Activated CD8-positive, alpha-beta T cell treated with anti-CD3 and anti-CD28 coated beads for 36 hours (primary cell): ENCODE measurements at regions of chr20 and their contacts with region 1.

Region 1: DNA sequence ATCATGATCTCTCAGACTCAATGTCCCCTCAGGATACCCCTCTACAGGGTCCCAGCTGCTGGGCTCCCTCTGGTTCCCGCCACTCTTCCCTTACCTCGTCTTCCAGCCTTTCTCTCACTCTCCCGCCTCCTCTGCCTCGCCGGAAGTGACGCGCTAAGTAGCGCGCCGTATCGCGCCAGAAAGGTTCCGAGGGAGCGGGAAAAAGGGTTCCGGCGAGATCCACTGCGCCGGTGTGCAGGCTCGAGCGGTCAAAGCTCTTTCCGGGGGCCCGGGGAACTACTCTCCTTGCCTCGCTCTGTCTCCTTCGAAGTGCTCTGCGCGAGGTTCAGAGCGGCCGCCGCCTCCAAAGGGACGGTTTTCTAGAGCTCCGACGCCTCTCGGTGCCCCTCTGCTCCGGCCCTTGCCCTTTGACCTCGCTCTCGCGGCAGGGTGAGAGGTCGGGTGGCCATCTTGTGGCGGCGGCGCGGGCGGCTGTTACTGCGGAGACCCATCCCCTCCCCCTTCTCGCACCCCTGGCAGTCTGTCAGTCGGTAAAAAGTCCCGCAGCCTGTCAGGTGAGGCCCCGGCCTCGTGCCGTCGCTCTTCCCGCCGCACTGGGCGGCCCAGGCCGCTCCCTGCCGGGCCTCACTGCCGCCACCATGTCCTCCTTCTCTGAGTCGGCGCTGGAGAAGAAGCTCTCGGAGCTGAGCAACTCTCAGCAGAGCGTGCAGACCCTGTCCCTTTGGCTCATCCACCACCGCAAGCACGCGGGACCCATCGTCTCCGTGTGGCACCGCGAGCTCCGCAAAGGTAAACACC is at the starts of genes RPRD1B and TTI1:
- DNase-seq: peak; percentile 91
- ATAC-seq: peak; percentile 89
- H3K4me3 Mint-ChIP-seq: peak within 1 kb of the TSS; percentile 88
- H3K27ac Mint-ChIP-seq: peak within 1 kb of the TSS; percentile 99
- H3K4me1 Mint-ChIP-seq: peaks cover 60% of the 10 kb centered on the region
- H3K27me3 Mint-ChIP-seq: no peaks in the 10 kb centered on the region
- CTCF ChIP-seq: no peak
- total RNA-seq, gene RPRD1B: 29.1 to 29.3 TPM
- total RNA-seq, gene TTI1: 34.1 to 39.7 TPM

Region 2: DNA sequence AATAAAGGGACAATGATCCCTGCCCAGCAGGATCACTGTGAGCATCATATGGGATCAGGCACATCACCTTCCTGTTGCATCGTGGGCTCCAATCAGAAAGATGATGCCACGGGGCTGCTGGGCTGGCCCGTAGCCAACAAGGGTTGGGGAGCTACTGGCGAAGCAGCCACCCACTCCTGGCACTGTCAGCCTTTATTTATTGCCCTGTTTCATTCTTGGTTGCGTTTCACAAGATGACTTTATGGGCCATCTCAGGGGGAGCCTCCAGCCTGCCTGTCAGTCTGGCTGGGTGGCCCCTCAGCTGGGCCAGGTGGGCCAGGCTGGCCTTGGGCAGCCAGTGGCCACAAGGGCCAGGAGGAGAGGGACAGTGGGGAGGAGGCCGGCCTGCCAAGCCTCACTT is 113.2 kb before region 1 on chr20:
- CTCF ChIA-PET with region 1: no interaction called
- POLR2A ChIA-PET with region 1: no interaction called
- intact Hi-C with region 1: no loop called
- DNase-seq: peak; percentile 39
- ATAC-seq: no peak
- H3K4me3 Mint-ChIP-seq: no peak overlapping the region
- H3K27ac Mint-ChIP-seq: no peak overlapping the region
- H3K4me1 Mint-ChIP-seq: peaks cover 8% of the 10 kb centered on the region
- H3K27me3 Mint-ChIP-seq: peaks cover 18% of the 10 kb centered on the region
- CTCF ChIP-seq: no peak

Region 3: GRCh38 chr20:38043512-38044300 is 10.2 kb after region 1 on chr20:
- CTCF ChIA-PET with region 1: interaction called, 7 read pairs
- POLR2A ChIA-PET with region 1: interaction called, 23 read pairs
- intact Hi-C with region 1: no loop called
- DNase-seq: peak; percentile 35
- ATAC-seq: peak; percentile 79
- H3K4me3 Mint-ChIP-seq: no peak overlapping the region
- H3K27ac Mint-ChIP-seq: peak overlapping the region; percentile 67
- H3K4me1 Mint-ChIP-seq: peaks cover 46% of the 10 kb centered on the region
- H3K27me3 Mint-ChIP-seq: no peaks in the 10 kb centered on the region
- CTCF ChIP-seq: no peak

Region 4: DNA sequence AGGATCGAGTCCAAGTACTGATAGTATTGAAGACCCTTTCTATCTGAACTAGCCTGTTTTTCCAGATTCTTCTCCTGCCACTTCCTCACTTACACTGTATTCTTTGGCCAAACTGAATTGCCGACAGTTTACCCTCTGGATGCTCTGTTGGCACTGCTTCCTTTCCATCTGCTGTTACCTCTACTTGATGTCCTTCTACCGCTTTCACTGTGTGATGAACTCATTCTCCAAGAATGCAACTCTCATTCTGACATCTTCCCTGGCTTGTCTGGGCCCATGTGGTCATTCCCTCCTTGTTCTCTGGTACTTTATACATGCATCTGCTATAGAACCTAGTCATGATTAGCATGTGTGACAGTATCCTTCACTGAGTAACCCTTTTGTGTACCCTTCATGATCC is 16.3 kb after region 1 on chr20:
- CTCF ChIA-PET with region 1: interaction called, 7 read pairs
- POLR2A ChIA-PET with region 1: interaction called, 23 read pairs
- intact Hi-C with region 1: no loop called
- DNase-seq: no peak
- ATAC-seq: peak; percentile 30
- H3K4me3 Mint-ChIP-seq: no peak overlapping the region
- H3K27ac Mint-ChIP-seq: peak overlapping the region; percentile 69
- H3K4me1 Mint-ChIP-seq: peaks cover 51% of the 10 kb centered on the region
- H3K27me3 Mint-ChIP-seq: no peaks in the 10 kb centered on the region
- CTCF ChIP-seq: no peak